CD8-positive, alpha-beta T cell (primary cell): ENCODE measurements at regions of chrX and their contacts with region 1.

Region 1: GRCh38 chrX:133776072-133776471 is 209.3 kb downstream of the GPC3 start:
- DNase-seq: peak; percentile 1 to 68 (median 38)
- ATAC-seq: no peak
- H3K4me3 ChIP-seq: no peak overlapping the region
- H3K4me3 Mint-ChIP-seq: no peak overlapping the region
- H3K27ac ChIP-seq: no peak overlapping the region
- H3K27ac Mint-ChIP-seq: no peak overlapping the region
- H3K4me1 ChIP-seq: no peaks in the 10 kb centered on the region
- H3K4me1 Mint-ChIP-seq: no peaks in the 10 kb centered on the region
- H3K27me3 ChIP-seq: no peaks in the 10 kb centered on the region
- H3K27me3 Mint-ChIP-seq: no peaks in the 10 kb centered on the region
- CTCF ChIP-seq: peak; percentile 51

Region 2: DNA sequence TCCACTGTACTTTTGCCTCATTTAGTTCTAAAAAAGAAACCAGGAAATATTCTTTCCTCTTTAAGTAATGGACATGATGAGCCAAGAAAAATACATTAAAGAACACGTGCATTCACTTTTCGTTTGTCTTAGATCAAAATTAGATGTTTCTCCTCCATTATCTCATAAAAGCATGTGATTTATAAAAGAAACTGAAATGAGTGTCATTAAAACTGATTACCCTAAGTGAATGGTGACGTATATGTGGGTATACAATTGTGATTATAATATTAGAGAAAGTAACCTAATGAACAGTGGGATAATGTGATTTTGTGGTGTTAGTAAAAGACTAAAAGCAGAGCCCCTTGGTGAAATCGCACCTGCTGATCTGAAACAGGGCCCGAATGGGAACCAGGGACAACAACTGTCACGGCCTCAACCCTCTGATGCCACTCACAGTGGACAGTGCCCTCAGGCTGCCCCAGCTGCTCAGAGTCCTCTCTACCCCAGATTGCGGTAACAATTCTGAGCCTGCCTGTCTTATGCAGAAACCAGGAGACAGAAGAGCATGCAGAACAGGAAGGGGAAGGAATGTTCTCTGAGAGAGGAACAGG is 791.9 kb before region 1 on chrX:
- CTCF ChIA-PET with region 1: no interaction called
- POLR2A ChIA-PET with region 1: no interaction called
- intact Hi-C with region 1: loop called in 1 of 2 experiments (anchors 5 kb)
- DNase-seq: no peak
- ATAC-seq: no peak
- H3K4me3 ChIP-seq: no peak overlapping the region
- H3K4me3 Mint-ChIP-seq: no peak overlapping the region
- H3K27ac ChIP-seq: no peak overlapping the region
- H3K27ac Mint-ChIP-seq: no peak overlapping the region
- H3K4me1 ChIP-seq: no peaks in the 10 kb centered on the region
- H3K4me1 Mint-ChIP-seq: no peaks in the 10 kb centered on the region
- H3K27me3 ChIP-seq: no peaks in the 10 kb centered on the region
- H3K27me3 Mint-ChIP-seq: peaks cover 8% of the 10 kb centered on the region
- CTCF ChIP-seq: no peak

Region 3: GRCh38 chrX:133698298-133698697 is 77.8 kb before region 1 on chrX:
- CTCF ChIA-PET with region 1: interaction called, 7 read pairs
- POLR2A ChIA-PET with region 1: no interaction called
- intact Hi-C with region 1: loop called (anchors 1 to 2 kb)
- DNase-seq: peak in 2 of 9 experiments; percentile 1 to 18
- ATAC-seq: no peak
- H3K4me3 ChIP-seq: no peak overlapping the region
- H3K4me3 Mint-ChIP-seq: no peak overlapping the region
- H3K27ac ChIP-seq: no peak overlapping the region
- H3K27ac Mint-ChIP-seq: no peak overlapping the region
- H3K4me1 ChIP-seq: no peaks in the 10 kb centered on the region
- H3K4me1 Mint-ChIP-seq: no peaks in the 10 kb centered on the region
- H3K27me3 ChIP-seq: no peaks in the 10 kb centered on the region
- H3K27me3 Mint-ChIP-seq: no peaks in the 10 kb centered on the region
- CTCF ChIP-seq: no peak

Region 4: DNA sequence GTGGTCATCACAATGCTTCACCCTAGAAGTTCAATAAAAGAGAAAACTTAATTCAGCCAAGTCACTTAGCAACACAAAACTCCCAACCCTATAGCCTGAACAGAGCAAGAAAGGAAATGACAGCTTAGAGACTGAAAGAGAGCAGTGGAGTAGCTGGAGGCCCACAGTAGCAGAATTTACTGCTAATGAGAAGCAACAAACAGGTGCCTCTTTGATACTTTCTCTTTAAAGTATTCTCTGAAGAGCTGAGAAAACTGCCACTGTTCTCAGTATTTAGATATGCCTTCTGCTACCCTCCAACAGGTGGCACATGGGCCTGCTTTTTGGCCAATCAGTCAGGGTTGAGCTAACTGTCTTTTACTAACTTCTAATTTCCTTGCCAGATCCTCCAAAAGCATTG is 30.7 kb before region 1 on chrX:
- CTCF ChIA-PET with region 1: interaction called, 15 read pairs
- POLR2A ChIA-PET with region 1: no interaction called
- intact Hi-C with region 1: loop called (anchors 1 to 2 kb)
- DNase-seq: peak in 4 of 9 experiments; percentile 17 to 57 (median 30)
- ATAC-seq: peak; percentile 78
- H3K4me3 ChIP-seq: no peak overlapping the region
- H3K4me3 Mint-ChIP-seq: no peak overlapping the region
- H3K27ac ChIP-seq: no peak overlapping the region
- H3K27ac Mint-ChIP-seq: peak overlapping the region; percentile 71
- H3K4me1 ChIP-seq: peaks cover 48% of the 10 kb centered on the region
- H3K4me1 Mint-ChIP-seq: peaks cover 53% of the 10 kb centered on the region
- H3K27me3 ChIP-seq: no peaks in the 10 kb centered on the region
- H3K27me3 Mint-ChIP-seq: no peaks in the 10 kb centered on the region
- CTCF ChIP-seq: peak; percentile 15

Region 5: GRCh38 chrX:134396174-134396573 is 620.1 kb after region 1 on chrX:
- CTCF ChIA-PET with region 1: no interaction called
- POLR2A ChIA-PET with region 1: no interaction called
- intact Hi-C with region 1: loop called in 1 of 2 experiments (anchors 5 kb)
- DNase-seq: peak in 2 of 9 experiments; percentile 14 to 33
- ATAC-seq: no peak
- H3K4me3 ChIP-seq: no peak overlapping the region
- H3K4me3 Mint-ChIP-seq: no peak overlapping the region
- H3K27ac ChIP-seq: no peak overlapping the region
- H3K27ac Mint-ChIP-seq: no peak overlapping the region
- H3K4me1 ChIP-seq: no peaks in the 10 kb centered on the region
- H3K4me1 Mint-ChIP-seq: no peaks in the 10 kb centered on the region
- H3K27me3 ChIP-seq: no peaks in the 10 kb centered on the region
- H3K27me3 Mint-ChIP-seq: no peaks in the 10 kb centered on the region
- CTCF ChIP-seq: peak; percentile 57